Endothelial cell of umbilical vein (primary cell): ENCODE measurements at regions of chr17 and their contacts with region 1.

Region 1: DNA sequence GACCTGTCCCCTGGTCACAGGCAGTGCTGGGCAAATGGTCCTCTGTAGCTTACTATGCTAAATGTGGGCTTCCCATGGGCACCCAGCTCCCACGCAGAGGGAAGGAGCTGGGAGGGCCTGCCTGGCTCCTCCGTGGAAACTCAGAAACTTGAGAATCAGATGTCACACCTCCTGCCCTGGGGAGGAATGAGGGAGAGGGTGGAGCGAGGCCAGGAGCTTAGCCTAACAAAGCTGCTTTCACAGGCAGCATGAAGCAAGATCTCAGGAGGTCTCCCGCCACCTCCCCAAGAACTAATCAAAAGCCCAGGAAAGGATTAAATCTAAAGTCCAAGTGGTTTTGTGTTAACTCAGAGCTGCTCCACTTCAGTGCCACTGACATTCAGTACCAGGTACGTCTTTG is 33.6 kb upstream of the XYLT2 start:
- DNase-seq: no peak
- H3K4me3 ChIP-seq: no peak overlapping the region
- H3K27ac ChIP-seq: no peak overlapping the region
- H3K4me1 ChIP-seq: no peaks in the 10 kb centered on the region
- H3K27me3 ChIP-seq: peaks cover 16% of the 10 kb centered on the region in 2 experiments
- CTCF ChIP-seq: no peak
- POLR2A ChIP-seq: no peak

Region 2: GRCh38 chr17:49729069-49729468 is 583.2 kb before region 1 on chr17:
- CTCF ChIA-PET with region 1: no interaction called
- POLR2A ChIA-PET with region 1: no interaction called
- dilution Hi-C with region 1: no loop called
- intact Hi-C with region 1: loop called (anchors 5 kb)
- DNase-seq: no peak
- H3K4me3 ChIP-seq: no peak overlapping the region
- H3K27ac ChIP-seq: no peak overlapping the region
- H3K4me1 ChIP-seq: no peaks in the 10 kb centered on the region
- H3K27me3 ChIP-seq: no peaks in the 10 kb centered on the region
- CTCF ChIP-seq: no peak
- POLR2A ChIP-seq: no peak

Region 3: GRCh38 chr17:50129728-50130558 is 182.4 kb before region 1 on chr17 and contains the start of gene SAMD14:
- CTCF ChIA-PET with region 1: no interaction called
- POLR2A ChIA-PET with region 1: no interaction called
- dilution Hi-C with region 1: no loop called
- intact Hi-C with region 1: no loop called
- DNase-seq: peak; percentile 53
- H3K4me3 ChIP-seq: peak within 1 kb of the TSS; percentile 22 to 53 (median 31)
- H3K27ac ChIP-seq: peak within 1 kb of the TSS; percentile 56
- H3K4me1 ChIP-seq: peaks cover 21% of the 10 kb centered on the region
- H3K27me3 ChIP-seq: no peaks in the 10 kb centered on the region
- CTCF ChIP-seq: no peak
- POLR2A ChIP-seq: no peak
- total RNA-seq, gene SAMD14: 15.6 and 16.1 TPM in 2 replicates